Lower lobe of right lung (tissue), 2 donors: ENCODE measurements at regions of chr1 and their contacts with region 1.

Region 1: DNA sequence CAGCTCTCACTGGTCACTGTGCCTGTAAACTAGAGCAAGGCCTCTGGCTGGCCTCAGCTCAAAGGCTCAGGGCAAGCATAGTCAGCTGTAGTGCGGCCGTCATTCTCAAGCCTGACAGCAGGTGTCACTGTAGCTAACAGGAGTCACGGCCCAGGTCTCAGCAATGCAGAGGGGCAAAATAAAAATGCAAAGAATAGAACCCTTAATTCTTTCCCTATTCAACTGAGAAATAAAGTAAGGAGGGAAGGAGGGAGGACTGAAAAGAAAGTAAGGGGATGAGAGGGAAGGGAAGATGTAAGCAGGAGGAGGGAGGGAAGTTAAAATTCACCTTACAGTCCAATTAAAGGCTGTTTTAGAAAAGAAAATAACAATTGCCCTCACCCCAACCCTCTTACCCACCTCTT is 106.1 kb downstream of the KIAA0319L start:
- DNase-seq: peak; percentile 86
- ATAC-seq: peak; percentile 88
- H3K4me3 ChIP-seq: no peak overlapping the region
- H3K27ac ChIP-seq: peak overlapping the region; percentile 57
- H3K4me1 ChIP-seq: peaks cover 62% of the 10 kb centered on the region
- H3K27me3 ChIP-seq: no peaks in the 10 kb centered on the region
- CTCF ChIP-seq: peak; percentile 88

Region 2: GRCh38 chr1:35557292-35558063 is 106.4 kb after region 1 on chr1 and contains the starts of genes KIAA0319L and NCDN:
- intact Hi-C with region 1: loop called (anchors 10 kb)
- DNase-seq: peak; percentile 98
- ATAC-seq: peak; percentile 95 to 97
- H3K4me3 ChIP-seq: peak within 1 kb of the TSS; percentile 85
- H3K27ac ChIP-seq: peak within 1 kb of the TSS; percentile 96
- H3K4me1 ChIP-seq: peaks cover 52% of the 10 kb centered on the region
- H3K27me3 ChIP-seq: no peaks in the 10 kb centered on the region
- CTCF ChIP-seq: no peak
- total RNA-seq, gene KIAA0319L: 79.6 TPM
- total RNA-seq, gene NCDN: 20.2 TPM